ENCODE measurements at regions of chr17 and their contacts with region 1.

Region 1: DNA sequence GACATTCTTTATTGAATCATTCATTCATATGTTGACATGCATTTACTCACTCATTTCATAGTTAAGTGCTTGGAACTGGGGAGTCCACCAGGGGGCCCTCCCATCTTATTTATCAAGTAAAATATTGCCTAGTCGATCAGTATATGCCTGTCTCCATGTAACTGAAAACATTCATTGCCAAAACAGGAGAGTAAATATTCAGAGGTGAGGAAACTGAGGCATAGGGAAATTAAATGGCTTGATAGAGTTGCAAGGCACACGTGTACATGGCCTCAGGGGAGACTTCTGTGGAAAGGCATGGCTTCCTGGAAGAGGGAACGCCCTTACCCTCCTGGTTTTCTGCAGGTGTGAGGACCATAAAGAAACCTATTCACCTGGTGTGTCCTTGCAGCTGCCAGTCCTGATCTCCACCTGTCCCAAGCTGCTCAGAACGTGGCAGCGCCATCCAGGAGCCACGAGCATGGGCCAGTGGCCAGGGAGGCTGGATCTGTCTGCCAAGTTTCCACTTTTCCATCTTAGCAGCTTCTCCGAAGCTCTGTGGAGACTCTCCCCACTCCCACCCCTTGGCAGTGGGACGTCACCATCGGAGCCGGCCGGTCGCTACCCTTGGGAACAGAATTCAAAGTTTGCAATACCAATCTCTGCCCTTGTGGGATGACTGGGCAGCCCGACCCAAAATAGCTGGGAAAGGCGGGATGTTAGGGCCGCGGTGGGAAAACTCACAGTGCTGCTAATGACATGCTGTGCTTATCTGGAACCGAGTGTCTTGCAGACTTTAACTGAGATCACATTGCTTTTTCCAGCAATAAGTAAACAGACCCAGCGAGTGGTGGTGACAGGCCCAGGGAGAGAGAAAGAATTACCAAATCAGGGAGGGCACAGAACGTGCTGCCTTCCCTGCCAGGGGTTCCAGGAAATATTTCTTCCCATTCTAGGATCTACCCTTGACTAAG is 4.1 kb upstream of the C1QTNF1 start:
- DNase-seq: peak; percentile 79
- ATAC-seq: peak; percentile 66
- H3K4me3 ChIP-seq: peak overlapping the region in 1 of 3 experiments; percentile 1; a peak in 1 of 6 replicates
- H3K27ac ChIP-seq: no peak overlapping the region
- H3K4me1 ChIP-seq: peaks cover 41% of the 10 kb centered on the region
- H3K27me3 ChIP-seq: no peaks in the 10 kb centered on the region
- CTCF ChIP-seq: peak; percentile 76
- EP300 ChIP-seq: no peak
- POLR2A ChIP-seq: no peak
- RAD21 ChIP-seq: peak; percentile 85

Region 2: GRCh38 chr17:77507111-77507885 is 1512.6 kb before region 1 on chr17:
- CTCF ChIA-PET with region 1: no interaction called
- POLR2A ChIA-PET with region 1: no interaction called
- in situ Hi-C with region 1: no loop called
- intact Hi-C with region 1: no loop called
- DNase-seq: no peak
- ATAC-seq: peak; percentile 2; the same call in 2 of the 3 replicates
- H3K4me3 ChIP-seq: no peak overlapping the region
- H3K27ac ChIP-seq: no peak overlapping the region
- H3K4me1 ChIP-seq: peaks cover 53% of the 10 kb centered on the region
- H3K27me3 ChIP-seq: no peaks in the 10 kb centered on the region
- CTCF ChIP-seq: peak; percentile 49
- EP300 ChIP-seq: no peak
- POLR2A ChIP-seq: no peak
- RAD21 ChIP-seq: peak; percentile 10; the same call in 1 of the 2 replicates

Region 3: DNA sequence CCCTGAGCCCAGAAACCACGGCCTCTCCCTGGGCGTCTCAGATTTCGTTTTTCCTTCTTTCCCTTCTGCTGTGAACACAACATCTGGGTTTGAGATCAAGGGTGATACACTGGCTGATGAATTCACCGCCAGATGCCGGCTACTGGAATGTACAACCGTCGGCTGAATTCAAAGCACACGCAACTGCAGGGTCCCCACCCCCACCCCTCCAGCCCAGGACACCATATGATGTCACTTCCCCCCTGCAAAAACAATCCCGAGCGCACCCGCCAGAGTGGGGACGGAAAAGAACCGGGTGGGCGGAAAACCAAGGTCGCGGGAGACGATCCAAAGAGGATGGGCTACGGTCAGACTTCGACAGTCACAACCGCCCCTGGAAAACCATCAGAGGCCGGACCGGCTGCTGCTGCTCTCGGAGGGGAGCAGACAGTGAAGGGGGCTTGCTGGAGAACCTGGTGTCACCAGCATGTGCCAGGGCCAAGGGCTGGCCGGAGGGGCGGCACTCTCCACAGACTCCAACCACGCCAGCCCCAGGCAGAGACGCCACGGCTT is 140.2 kb before region 1 on chr17:
- CTCF ChIA-PET with region 1: no interaction called
- POLR2A ChIA-PET with region 1: no interaction called
- in situ Hi-C with region 1: no loop called
- intact Hi-C with region 1: no loop called
- DNase-seq: no peak
- ATAC-seq: no peak
- H3K4me3 ChIP-seq: no peak overlapping the region
- H3K27ac ChIP-seq: no peak overlapping the region
- H3K4me1 ChIP-seq: peaks cover 26% of the 10 kb centered on the region
- H3K27me3 ChIP-seq: no peaks in the 10 kb centered on the region
- CTCF ChIP-seq: no peak
- EP300 ChIP-seq: no peak
- POLR2A ChIP-seq: no peak
- RAD21 ChIP-seq: no peak

Region 4: GRCh38 chr17:79009397-79010308 is 10.3 kb before region 1 on chr17 and contains the start of gene CANT1:
- CTCF ChIA-PET with region 1: no interaction called
- POLR2A ChIA-PET with region 1: interaction called, 118 read pairs
- in situ Hi-C with region 1: no loop called
- intact Hi-C with region 1: no loop called
- DNase-seq: peak; percentile 84
- ATAC-seq: peak; percentile 93
- H3K4me3 ChIP-seq: peak within 1 kb of the TSS; percentile 95 to 98 (median 97)
- H3K27ac ChIP-seq: peak within 1 kb of the TSS; percentile 59
- H3K4me1 ChIP-seq: peaks cover 64% of the 10 kb centered on the region
- H3K27me3 ChIP-seq: peaks cover 0 to 2% of the 10 kb centered on the region in 2 experiments; a peak in 1 of 5 replicates
- CTCF ChIP-seq: no peak
- EP300 ChIP-seq: no peak
- POLR2A ChIP-seq: peak; percentile 59 to 87
- RAD21 ChIP-seq: no peak
- total RNA-seq, gene CANT1: 24.9 and 34.1 TPM in 2 replicates

Region 5: DNA sequence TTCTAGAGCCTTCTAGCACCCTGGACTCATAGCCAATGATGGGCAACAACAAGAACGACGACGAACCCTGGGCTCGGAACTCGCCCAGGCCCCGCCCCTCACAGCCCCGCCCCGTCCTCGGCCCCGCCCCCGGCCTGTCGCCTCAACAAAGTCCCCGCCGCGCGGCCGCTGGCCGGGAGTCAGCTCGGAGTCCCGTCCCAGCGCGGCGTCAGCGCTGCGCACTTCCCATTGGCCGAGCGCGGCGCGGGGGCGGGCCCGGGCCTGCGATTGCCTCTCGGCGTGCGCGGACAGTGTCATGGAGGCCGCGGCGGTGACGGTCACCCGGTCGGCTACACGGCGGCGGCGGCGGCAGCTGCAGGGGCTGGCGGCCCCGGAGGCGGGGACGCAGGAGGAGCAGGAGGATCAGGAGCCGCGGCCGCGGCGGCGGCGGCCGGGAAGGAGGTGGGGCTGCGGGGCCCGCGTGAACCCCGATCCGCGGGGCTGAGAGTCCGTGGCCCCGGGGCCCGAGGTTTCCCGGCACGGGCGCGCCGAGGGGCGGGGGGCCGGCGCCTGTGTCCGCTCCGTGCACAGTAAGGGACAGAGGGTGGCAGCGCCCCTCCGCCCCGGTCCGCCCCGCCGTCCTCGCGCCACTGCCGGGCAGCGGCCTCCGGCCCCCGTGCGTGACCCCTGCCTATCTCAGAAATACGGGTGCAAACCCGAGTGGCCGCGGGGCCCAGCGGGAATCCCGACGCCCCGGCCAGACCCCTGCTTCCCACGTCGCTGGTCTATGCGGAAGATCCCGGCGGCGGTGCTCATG is 54.9 kb after region 1 on chr17 and contains the start of gene ENGASE:
- CTCF ChIA-PET with region 1: no interaction called
- POLR2A ChIA-PET with region 1: interaction called, 3 read pairs
- in situ Hi-C with region 1: no loop called
- intact Hi-C with region 1: loop called (anchors 5 kb)
- DNase-seq: peak; percentile 88
- ATAC-seq: peak; percentile 96
- H3K4me3 ChIP-seq: peak within 1 kb of the TSS; percentile 78 to 87 (median 83)
- H3K27ac ChIP-seq: peak within 1 kb of the TSS; percentile 47
- H3K4me1 ChIP-seq: peaks cover 41% of the 10 kb centered on the region
- H3K27me3 ChIP-seq: peaks cover 0 to 17% of the 10 kb centered on the region in 2 experiments; a peak in 2 of 5 replicates
- CTCF ChIP-seq: no peak
- EP300 ChIP-seq: no peak
- POLR2A ChIP-seq: peak; percentile 48 to 84; a peak in 3 of 4 replicates
- RAD21 ChIP-seq: no peak; the same call in 1 of the 2 replicates
- total RNA-seq, gene ENGASE: 2.8 and 10.6 TPM in 2 replicates

Measured in HepG2 (cell line).